Esophagus muscularis mucosa (tissue), 4 donors: ENCODE measurements at regions of chr17 and their contacts with region 1.

Region 1: DNA sequence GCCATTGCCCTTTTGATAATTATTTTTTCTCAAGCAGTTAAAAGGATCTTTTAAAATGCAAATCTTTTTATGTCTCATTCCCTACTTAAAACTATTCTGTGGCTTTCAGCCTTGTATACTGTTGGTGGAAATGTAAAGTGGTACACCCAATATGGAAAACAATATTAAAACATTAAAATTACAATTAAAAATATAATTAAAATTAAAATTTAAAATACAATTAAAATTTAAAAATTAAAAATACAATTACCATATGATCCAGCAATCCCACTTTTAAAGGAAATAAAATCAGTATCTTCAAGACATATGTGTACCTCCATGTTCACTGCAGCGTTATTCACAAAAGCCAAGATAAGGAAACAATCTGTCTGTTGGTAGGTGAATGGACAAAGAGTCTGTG is 340.8 kb upstream of the TOM1L1 start:
- DNase-seq: no peak
- H3K4me3 ChIP-seq: no peak overlapping the region
- H3K27ac ChIP-seq: no peak overlapping the region
- H3K4me1 ChIP-seq: no peaks in the 10 kb centered on the region
- H3K27me3 ChIP-seq: no peaks in the 10 kb centered on the region
- CTCF ChIP-seq: no peak
- EP300 ChIP-seq: no peak
- POLR2A ChIP-seq: no peak

Region 2: GRCh38 chr17:54269881-54270280 is 290.0 kb before region 1 on chr17:
- intact Hi-C with region 1: no loop called
- DNase-seq: no peak
- H3K4me3 ChIP-seq: no peak overlapping the region
- H3K27ac ChIP-seq: no peak overlapping the region
- H3K4me1 ChIP-seq: no peaks in the 10 kb centered on the region
- H3K27me3 ChIP-seq: no peaks in the 10 kb centered on the region
- CTCF ChIP-seq: no peak
- EP300 ChIP-seq: no peak
- POLR2A ChIP-seq: no peak

Region 3: DNA sequence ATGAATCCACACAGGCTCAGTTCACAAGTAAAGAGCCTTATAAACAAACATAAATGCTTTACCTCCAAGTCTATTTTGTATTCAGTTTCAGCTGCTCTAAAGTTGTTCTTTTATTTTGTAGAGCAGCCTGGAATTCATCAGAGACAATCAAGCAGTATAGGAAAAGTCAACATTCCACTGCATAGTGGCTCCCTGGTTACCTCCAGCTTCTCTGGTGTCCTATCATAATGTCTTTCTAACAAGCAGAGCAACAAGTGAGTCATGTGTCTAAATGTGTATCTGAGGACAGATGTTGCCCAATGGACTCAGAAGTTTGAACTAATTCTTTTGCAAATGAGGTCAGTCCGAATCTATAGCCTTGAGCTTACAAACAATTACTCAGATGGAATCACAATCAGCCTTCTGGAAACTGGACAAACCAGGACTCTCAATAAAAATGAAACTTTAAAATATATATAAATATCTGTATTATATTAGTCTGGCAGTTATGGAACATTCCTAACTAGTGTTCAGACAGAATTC is 48.8 kb after region 1 on chr17:
- intact Hi-C with region 1: loop called (anchors 10 kb)
- DNase-seq: no peak
- H3K4me3 ChIP-seq: no peak overlapping the region
- H3K27ac ChIP-seq: no peak overlapping the region
- H3K4me1 ChIP-seq: no peaks in the 10 kb centered on the region
- H3K27me3 ChIP-seq: no peaks in the 10 kb centered on the region
- CTCF ChIP-seq: no peak
- EP300 ChIP-seq: no peak
- POLR2A ChIP-seq: no peak